ENCODE measurements at regions of chr1 and their contacts with region 1.

Region 1: DNA sequence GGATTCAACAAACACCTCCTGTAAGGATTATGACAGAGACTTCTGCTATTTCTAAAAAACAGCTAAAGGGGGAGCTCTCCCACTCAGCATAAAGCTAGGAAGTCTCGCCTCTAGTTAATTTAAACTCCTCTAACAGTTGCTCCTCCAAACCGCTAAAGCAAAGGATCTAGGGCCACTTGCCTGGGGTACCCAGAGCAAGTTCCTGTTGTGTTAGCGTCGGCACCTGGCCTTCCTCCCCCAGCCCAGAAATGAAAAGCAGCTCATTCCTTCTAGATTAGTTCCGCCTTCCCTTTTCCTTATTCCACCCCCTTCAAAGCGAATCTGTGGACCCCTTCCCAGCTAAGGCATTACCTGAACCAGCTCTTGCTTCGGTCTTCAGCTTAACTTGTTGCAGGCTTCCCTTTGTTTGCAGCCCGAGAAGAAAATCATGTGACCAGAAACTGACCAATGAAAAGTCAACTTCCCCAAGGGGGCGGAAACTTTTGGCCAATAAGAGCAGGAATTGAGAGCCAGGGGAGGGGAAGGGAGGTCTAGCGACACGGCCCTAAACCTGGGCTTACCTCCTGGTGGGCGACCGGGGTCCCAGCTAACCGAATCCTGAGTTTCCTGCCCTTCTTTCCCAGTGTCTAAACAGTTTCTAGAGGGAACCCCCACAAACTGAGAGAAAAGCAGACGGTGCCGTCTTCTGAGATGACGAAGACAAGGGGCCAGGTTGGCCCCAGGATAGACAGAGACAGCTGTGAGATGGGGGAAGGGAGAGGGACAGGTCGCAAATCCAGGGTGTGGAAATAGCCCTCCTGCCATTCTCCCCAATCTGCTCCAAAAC is at the start of gene PBXIP1:
- DNase-seq: peak; percentile 67 to 94 (median 89)
- H3K4me3 ChIP-seq: peak within 1 kb of the TSS; percentile 85
- H3K4me3 Mint-ChIP-seq: peak within 1 kb of the TSS; percentile 95 to 99 (median 97)
- H3K27ac ChIP-seq: peak within 1 kb of the TSS; percentile 100
- H3K27ac Mint-ChIP-seq: peak within 1 kb of the TSS; percentile 99 to 100 (median 100)
- H3K4me1 ChIP-seq: peaks cover 66% of the 10 kb centered on the region
- H3K4me1 Mint-ChIP-seq: peaks cover 63 to 90% (median 77%) of the 10 kb centered on the region in 3 donors
- H3K27me3 ChIP-seq: no peaks in the 10 kb centered on the region
- H3K27me3 Mint-ChIP-seq: peaks cover 0 to 9% of the 10 kb centered on the region in 2 donors
- total RNA-seq, gene PBXIP1: 35.9 to 36.1 TPM

Region 2: GRCh38 chr1:154974063-154974807 is 18.3 kb after region 1 on chr1 and contains the start of gene CKS1B:
- CTCF ChIA-PET with region 1: interaction called, 13 read pairs
- POLR2A ChIA-PET with region 1: interaction called, 14 read pairs
- DNase-seq: peak; percentile 93 to 99 (median 98)
- H3K4me3 ChIP-seq: peak within 1 kb of the TSS; percentile 95
- H3K4me3 Mint-ChIP-seq: no peak within 1 kb of the TSS
- H3K27ac ChIP-seq: peak within 1 kb of the TSS; percentile 95
- H3K27ac Mint-ChIP-seq: no peak within 1 kb of the TSS
- H3K4me1 ChIP-seq: peaks cover 40% of the 10 kb centered on the region
- H3K4me1 Mint-ChIP-seq: peaks cover 24 to 34% (median 28%) of the 10 kb centered on the region in 3 donors
- H3K27me3 ChIP-seq: no peaks in the 10 kb centered on the region
- H3K27me3 Mint-ChIP-seq: no peaks in the 10 kb centered on the region
- total RNA-seq, gene CKS1B: 125 to 126 TPM